ENCODE measurements at regions of chr3 and their contacts with region 1.

Region 1: GRCh38 chr3:143121241-143122088 is 1.9 kb downstream of the CHST2 start:
- DNase-seq: peak; percentile 72
- H3K4me3 ChIP-seq: peak overlapping the region; percentile 58
- H3K27ac ChIP-seq: no peak overlapping the region
- H3K4me1 ChIP-seq: peaks cover 7% of the 10 kb centered on the region
- H3K27me3 ChIP-seq: peaks cover 33% of the 10 kb centered on the region
- CTCF ChIP-seq: peak; percentile 67

Region 2: DNA sequence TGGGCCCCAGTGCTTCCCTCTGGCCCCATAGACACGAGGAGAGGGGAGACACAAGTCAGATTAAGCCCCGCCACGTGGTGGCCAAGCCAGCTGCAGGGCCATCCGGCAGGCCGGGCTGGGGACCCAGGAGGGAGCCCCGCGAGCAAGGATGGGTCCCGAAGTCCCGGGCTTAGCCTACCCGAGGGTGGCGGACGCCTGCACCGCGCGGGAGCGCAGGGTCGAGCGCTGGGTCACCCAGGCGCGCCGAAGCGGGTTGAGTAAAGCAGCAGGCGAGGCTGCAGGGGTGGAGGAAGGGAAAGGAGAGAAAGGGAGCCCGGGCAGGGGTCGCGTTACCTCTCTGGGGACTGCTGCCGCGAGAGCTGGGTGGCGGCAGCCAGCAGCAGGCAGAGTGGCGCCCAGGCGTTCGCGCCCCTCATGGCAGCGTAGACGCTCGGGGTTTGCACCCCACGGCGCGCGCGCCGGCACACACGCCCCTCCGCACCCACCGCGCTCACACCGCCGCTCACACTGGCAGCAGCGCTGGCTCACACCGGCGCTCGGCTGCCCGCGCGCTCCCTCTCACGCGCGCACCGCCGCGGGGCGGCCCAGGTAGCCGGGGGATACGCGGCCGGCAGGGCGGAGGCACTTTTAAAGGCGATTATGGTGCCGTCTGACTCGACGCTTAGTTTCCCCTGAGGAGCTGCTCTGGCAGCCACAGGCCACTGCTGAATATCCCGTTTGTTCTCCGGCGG is 232.8 kb before region 1 on chr3 and contains the start of gene PCOLCE2:
- CTCF ChIA-PET with region 1: no interaction called
- POLR2A ChIA-PET with region 1: no interaction called
- intact Hi-C with region 1: no loop called
- DNase-seq: peak; percentile 42
- H3K4me3 ChIP-seq: peak within 1 kb of the TSS; percentile 61
- H3K27ac ChIP-seq: no peak within 1 kb of the TSS
- H3K4me1 ChIP-seq: peaks cover 16% of the 10 kb centered on the region
- H3K27me3 ChIP-seq: peaks cover 13% of the 10 kb centered on the region
- CTCF ChIP-seq: no peak
- total RNA-seq, gene PCOLCE2: 5.0 and 6.4 TPM in 2 replicates

Region 3: GRCh38 chr3:143329567-143330211 is 208.2 kb after region 1 on chr3:
- CTCF ChIA-PET with region 1: no interaction called
- POLR2A ChIA-PET with region 1: no interaction called
- intact Hi-C with region 1: loop called (anchors 5 kb)
- DNase-seq: no peak
- H3K4me3 ChIP-seq: no peak overlapping the region
- H3K27ac ChIP-seq: peak overlapping the region; percentile 70
- H3K4me1 ChIP-seq: peaks cover 57% of the 10 kb centered on the region
- H3K27me3 ChIP-seq: no peaks in the 10 kb centered on the region
- CTCF ChIP-seq: no peak

Region 4: DNA sequence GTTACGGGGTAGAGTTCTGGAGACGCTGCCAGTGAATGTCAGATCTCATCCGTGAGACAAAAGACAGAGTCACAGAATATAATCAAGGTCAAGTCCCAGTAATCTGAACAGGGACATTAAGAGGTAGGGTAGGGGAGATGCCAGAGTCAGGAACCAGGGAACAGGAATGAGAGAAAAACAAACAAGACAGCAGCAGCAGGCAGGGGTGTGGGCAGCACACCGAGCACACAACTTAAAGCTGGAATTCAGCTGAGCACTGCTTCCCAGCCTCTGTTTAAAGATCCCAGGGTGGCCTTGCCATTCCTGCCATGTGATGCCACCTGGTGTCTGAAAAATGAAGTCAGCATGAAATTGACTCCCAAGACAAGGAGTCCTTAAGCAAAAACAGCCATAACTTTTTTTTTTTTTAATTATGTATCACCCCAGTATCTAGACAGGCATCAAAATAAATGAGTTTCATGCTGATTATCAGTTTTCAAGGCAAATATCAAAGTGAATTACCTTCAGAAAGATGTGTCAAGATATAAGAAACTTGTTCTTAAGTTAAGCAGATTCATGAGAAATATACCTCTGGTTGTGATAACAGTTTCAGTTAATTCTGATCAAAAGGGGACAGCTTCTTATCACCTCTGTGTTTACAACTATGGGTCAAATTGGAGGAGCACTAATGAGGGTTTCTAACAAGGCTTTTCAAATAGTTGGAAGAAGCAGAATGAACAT is 523.1 kb after region 1 on chr3:
- CTCF ChIA-PET with region 1: interaction called, 7 read pairs
- POLR2A ChIA-PET with region 1: no interaction called
- intact Hi-C with region 1: loop called (anchors 1 kb)
- DNase-seq: peak; percentile 81
- H3K4me3 ChIP-seq: no peak overlapping the region
- H3K27ac ChIP-seq: no peak overlapping the region
- H3K4me1 ChIP-seq: peaks cover 5% of the 10 kb centered on the region
- H3K27me3 ChIP-seq: no peaks in the 10 kb centered on the region
- CTCF ChIP-seq: peak; percentile 74

Region 5: GRCh38 chr3:143674100-143674968 is 552.9 kb after region 1 on chr3:
- CTCF ChIA-PET with region 1: no interaction called
- POLR2A ChIA-PET with region 1: no interaction called
- intact Hi-C with region 1: loop called (anchors 10 kb)
- DNase-seq: peak; percentile 83
- H3K4me3 ChIP-seq: no peak overlapping the region
- H3K27ac ChIP-seq: no peak overlapping the region
- H3K4me1 ChIP-seq: no peaks in the 10 kb centered on the region
- H3K27me3 ChIP-seq: no peaks in the 10 kb centered on the region
- CTCF ChIP-seq: peak; percentile 92